GM18951 (cell line): ENCODE measurements at regions of chr6 and their contacts with region 1.

Region 1: GRCh38 chr6:32522302-32523047 is 7.6 kb downstream of the HLA-DRB5 start:
- POLR2A ChIP-seq: no peak

Region 2: GRCh38 chr6:32558426-32559057 is 36.1 kb after region 1 on chr6:
- in situ Hi-C with region 1: loop called (anchors 5 kb)
- POLR2A ChIP-seq: no peak